HAP-1 (cell line): ENCODE measurements at regions of chr5 and their contacts with region 1.

Region 1: GRCh38 chr5:58886315-58887207 is 303.7 kb downstream of the RAB3C start:
- DNase-seq: peak; percentile 27 to 64
- H3K4me3 ChIP-seq: no peak overlapping the region
- H3K4me1 ChIP-seq: no peaks in the 10 kb centered on the region
- H3K27me3 ChIP-seq: no peaks in the 10 kb centered on the region

Region 2: GRCh38 chr5:59007460-59008063 is 121.0 kb after region 1 on chr5:
- in situ Hi-C with region 1: loop called (anchors 10 kb)
- DNase-seq: peak in 1 of 2 experiments; percentile 58
- H3K4me3 ChIP-seq: no peak overlapping the region
- H3K4me1 ChIP-seq: no peaks in the 10 kb centered on the region
- H3K27me3 ChIP-seq: no peaks in the 10 kb centered on the region

Region 3: DNA sequence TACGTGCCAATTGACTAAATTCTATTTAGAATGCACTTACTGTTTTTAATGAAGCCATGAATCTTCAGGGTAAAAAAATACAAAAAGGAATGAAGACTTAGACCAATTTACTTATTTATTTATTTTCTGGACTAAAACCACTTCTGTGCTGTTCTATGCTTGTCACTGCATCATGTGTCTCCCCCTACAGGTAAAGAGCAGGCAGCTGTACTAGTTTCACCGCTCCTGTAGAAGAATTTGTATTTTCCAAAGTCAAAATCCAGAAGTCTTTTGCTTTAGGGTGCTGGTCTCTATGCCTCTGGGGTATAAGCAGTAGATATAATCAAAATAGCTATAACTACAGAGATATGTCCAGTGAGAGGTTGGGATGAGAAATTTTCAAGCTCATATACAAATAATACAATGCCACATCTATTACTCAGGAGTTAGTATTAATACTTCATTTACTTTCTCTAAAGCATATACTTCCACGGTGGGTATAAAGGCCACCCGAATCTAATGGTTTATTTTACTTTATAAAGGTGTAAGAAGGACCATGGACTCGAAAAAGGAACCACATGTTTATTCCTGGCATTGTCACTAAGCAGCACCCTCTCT is 287.8 kb after region 1 on chr5:
- in situ Hi-C with region 1: loop called (anchors 25 kb)
- DNase-seq: peak; percentile 20 to 39
- H3K4me3 ChIP-seq: no peak overlapping the region
- H3K4me1 ChIP-seq: no peaks in the 10 kb centered on the region
- H3K27me3 ChIP-seq: no peaks in the 10 kb centered on the region